B cell (primary cell): ENCODE measurements at regions of chr2 and their contacts with region 1.

Region 1: GRCh38 chr2:112726497-112727190 is 5.8 kb downstream of the NT5DC4 start:
- DNase-seq: peak; percentile 94
- ATAC-seq: peak; percentile 91
- H3K4me3 ChIP-seq: no peak overlapping the region
- H3K4me3 Mint-ChIP-seq: peak overlapping the region; percentile 80
- H3K27ac ChIP-seq: no peak overlapping the region
- H3K27ac Mint-ChIP-seq: peak overlapping the region; percentile 88
- H3K4me1 ChIP-seq: peaks cover 8 to 25% of the 10 kb centered on the region in 2 donors
- H3K4me1 Mint-ChIP-seq: peaks cover 17% of the 10 kb centered on the region
- H3K27me3 ChIP-seq: no peaks in the 10 kb centered on the region
- H3K27me3 Mint-ChIP-seq: no peaks in the 10 kb centered on the region
- CTCF ChIP-seq: peak; percentile 94

Region 2: GRCh38 chr2:112481050-112481527 is 245.6 kb before region 1 on chr2:
- CTCF ChIA-PET with region 1: interaction called, 4 read pairs
- POLR2A ChIA-PET with region 1: no interaction called
- intact Hi-C with region 1: loop called (anchors 2 kb)
- DNase-seq: peak; percentile 87
- ATAC-seq: peak; percentile 67
- H3K4me3 ChIP-seq: peak overlapping the region; percentile 84 to 96 (median 88)
- H3K4me3 Mint-ChIP-seq: peak overlapping the region; percentile 93
- H3K27ac ChIP-seq: peak overlapping the region; percentile 79 to 86
- H3K27ac Mint-ChIP-seq: peak overlapping the region; percentile 97
- H3K4me1 ChIP-seq: peaks cover 16 to 23% of the 10 kb centered on the region in 2 donors
- H3K4me1 Mint-ChIP-seq: peaks cover 18% of the 10 kb centered on the region
- H3K27me3 ChIP-seq: no peaks in the 10 kb centered on the region
- H3K27me3 Mint-ChIP-seq: no peaks in the 10 kb centered on the region
- CTCF ChIP-seq: peak; percentile 91

Region 3: GRCh38 chr2:112601751-112602150 is 124.9 kb before region 1 on chr2:
- CTCF ChIA-PET with region 1: interaction called, 101 read pairs
- POLR2A ChIA-PET with region 1: interaction called, 3 read pairs
- intact Hi-C with region 1: loop called (anchors 1 kb)
- DNase-seq: no peak
- ATAC-seq: no peak
- H3K4me3 ChIP-seq: no peak overlapping the region
- H3K4me3 Mint-ChIP-seq: no peak overlapping the region
- H3K27ac ChIP-seq: no peak overlapping the region
- H3K27ac Mint-ChIP-seq: no peak overlapping the region
- H3K4me1 ChIP-seq: peaks cover 0 to 5% of the 10 kb centered on the region in 2 donors
- H3K4me1 Mint-ChIP-seq: peaks cover 5% of the 10 kb centered on the region
- H3K27me3 ChIP-seq: no peaks in the 10 kb centered on the region
- H3K27me3 Mint-ChIP-seq: no peaks in the 10 kb centered on the region
- CTCF ChIP-seq: no peak

Region 4: GRCh38 chr2:112645310-112646101 is 81.1 kb before region 1 on chr2 and contains the start of gene SLC20A1:
- CTCF ChIA-PET with region 1: interaction called, 42 read pairs
- POLR2A ChIA-PET with region 1: interaction called, 19 read pairs
- intact Hi-C with region 1: loop called (anchors 1 kb)
- DNase-seq: peak; percentile 98
- ATAC-seq: peak; percentile 93
- H3K4me3 ChIP-seq: peak within 1 kb of the TSS; percentile 65 to 98 (median 90)
- H3K4me3 Mint-ChIP-seq: peak within 1 kb of the TSS; percentile 94
- H3K27ac ChIP-seq: peak within 1 kb of the TSS; percentile 90 to 96
- H3K27ac Mint-ChIP-seq: peak within 1 kb of the TSS; percentile 90
- H3K4me1 ChIP-seq: peaks cover 15 to 20% of the 10 kb centered on the region in 2 donors
- H3K4me1 Mint-ChIP-seq: peaks cover 26% of the 10 kb centered on the region
- H3K27me3 ChIP-seq: no peaks in the 10 kb centered on the region
- H3K27me3 Mint-ChIP-seq: no peaks in the 10 kb centered on the region
- CTCF ChIP-seq: peak; percentile 69
- total RNA-seq, gene SLC20A1: 54.9 and 57.1 TPM in 2 replicates

Region 5: GRCh38 chr2:112692496-112692911 is 34.1 kb before region 1 on chr2:
- CTCF ChIA-PET with region 1: interaction called, 56 read pairs
- POLR2A ChIA-PET with region 1: interaction called, 3 read pairs
- intact Hi-C with region 1: loop called (anchors 5 kb)
- DNase-seq: no peak
- ATAC-seq: no peak
- H3K4me3 ChIP-seq: no peak overlapping the region
- H3K4me3 Mint-ChIP-seq: no peak overlapping the region
- H3K27ac ChIP-seq: no peak overlapping the region
- H3K27ac Mint-ChIP-seq: no peak overlapping the region
- H3K4me1 ChIP-seq: peaks cover 0 to 23% of the 10 kb centered on the region in 2 donors
- H3K4me1 Mint-ChIP-seq: peaks cover 17% of the 10 kb centered on the region
- H3K27me3 ChIP-seq: no peaks in the 10 kb centered on the region
- H3K27me3 Mint-ChIP-seq: no peaks in the 10 kb centered on the region
- CTCF ChIP-seq: no peak

Region 6: GRCh38 chr2:112706170-112706664 is 20.4 kb before region 1 on chr2:
- CTCF ChIA-PET with region 1: interaction called, 67 read pairs
- POLR2A ChIA-PET with region 1: interaction called, 9 read pairs
- intact Hi-C with region 1: loop called (anchors 2 kb)
- DNase-seq: peak; percentile 45
- ATAC-seq: peak; percentile 28
- H3K4me3 ChIP-seq: no peak overlapping the region
- H3K4me3 Mint-ChIP-seq: peak overlapping the region; percentile 32
- H3K27ac ChIP-seq: no peak overlapping the region
- H3K27ac Mint-ChIP-seq: peak overlapping the region; percentile 81
- H3K4me1 ChIP-seq: peaks cover 58 to 73% of the 10 kb centered on the region in 2 donors
- H3K4me1 Mint-ChIP-seq: peaks cover 72% of the 10 kb centered on the region
- H3K27me3 ChIP-seq: no peaks in the 10 kb centered on the region
- H3K27me3 Mint-ChIP-seq: no peaks in the 10 kb centered on the region
- CTCF ChIP-seq: no peak